HepG2 (cell line): ENCODE measurements at regions of chr1 and their contacts with region 1.

Region 1: GRCh38 chr1:39105061-39105840 is 79.1 kb downstream of the NDUFS5 start:
- DNase-seq: no peak
- ATAC-seq: peak; percentile 76
- H3K4me3 ChIP-seq: peak overlapping the region; percentile 81 to 94 (median 93)
- H3K27ac ChIP-seq: peak overlapping the region; percentile 69
- H3K4me1 ChIP-seq: peaks cover 57% of the 10 kb centered on the region
- H3K27me3 ChIP-seq: no peaks in the 10 kb centered on the region
- CTCF ChIP-seq: no peak
- EP300 ChIP-seq: no peak
- POLR2A ChIP-seq: no peak
- RAD21 ChIP-seq: no peak

Region 2: DNA sequence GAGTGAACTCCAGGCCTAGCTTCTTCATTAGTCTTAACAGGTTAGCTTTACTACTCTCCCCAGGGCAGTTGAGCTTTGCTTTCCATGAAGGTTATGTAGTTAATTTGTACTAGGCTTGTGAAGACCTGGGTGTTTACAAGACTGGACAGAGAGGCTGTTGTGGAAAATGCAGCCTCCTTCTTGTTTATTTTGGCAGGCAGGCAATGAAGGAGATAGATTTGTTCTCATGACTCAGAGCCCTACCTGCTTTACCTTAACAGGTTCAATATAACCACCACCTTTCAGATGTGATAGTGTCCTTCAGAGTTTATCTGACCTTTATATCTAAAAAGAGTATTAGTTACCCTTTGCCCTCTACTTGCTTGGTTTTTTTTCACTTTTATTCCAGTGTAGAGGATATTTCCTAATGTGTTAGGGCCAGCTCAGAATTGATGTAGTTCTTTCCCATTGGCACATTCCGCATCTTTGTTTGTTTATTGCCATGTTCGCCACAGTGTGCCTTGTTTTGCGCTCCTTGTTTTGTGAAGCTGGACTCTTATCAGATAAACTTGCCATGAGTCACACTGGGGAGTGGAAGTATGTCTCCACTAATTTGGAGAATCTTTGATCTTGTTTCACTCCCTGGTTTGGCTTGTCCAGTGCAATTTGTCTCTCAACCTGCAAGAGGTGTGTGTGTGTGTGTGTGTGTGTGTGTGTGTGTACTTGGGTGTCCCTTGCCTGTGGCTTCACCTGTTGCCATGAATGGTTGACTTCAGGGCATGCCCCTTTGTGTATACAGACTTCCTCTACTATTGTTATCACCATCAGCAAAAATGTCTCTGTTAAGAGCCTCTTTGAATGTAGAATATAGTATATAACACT is 11.8 kb after region 1 on chr1:
- CTCF ChIA-PET with region 1: no interaction called
- POLR2A ChIA-PET with region 1: interaction called, 15 read pairs
- in situ Hi-C with region 1: no loop called
- intact Hi-C with region 1: no loop called
- DNase-seq: peak; percentile 84
- ATAC-seq: peak; percentile 75
- H3K4me3 ChIP-seq: no peak overlapping the region
- H3K27ac ChIP-seq: peak overlapping the region; percentile 33
- H3K4me1 ChIP-seq: peaks cover 46% of the 10 kb centered on the region
- H3K27me3 ChIP-seq: no peaks in the 10 kb centered on the region
- CTCF ChIP-seq: no peak
- EP300 ChIP-seq: peak in 1 of 2 experiments; percentile 45; a peak in 1 of 4 replicates
- POLR2A ChIP-seq: no peak
- RAD21 ChIP-seq: no peak

Region 3: GRCh38 chr1:39132505-39133339 is 27.5 kb after region 1 on chr1:
- CTCF ChIA-PET with region 1: interaction called, 7 read pairs
- POLR2A ChIA-PET with region 1: interaction called, 5 read pairs
- in situ Hi-C with region 1: no loop called
- intact Hi-C with region 1: loop called (anchors 2 kb)
- DNase-seq: peak; percentile 85
- ATAC-seq: peak; percentile 98
- H3K4me3 ChIP-seq: peak overlapping the region in 1 of 3 experiments; percentile 24; a peak in 1 of 6 replicates
- H3K27ac ChIP-seq: peak overlapping the region; percentile 52
- H3K4me1 ChIP-seq: peaks cover 42% of the 10 kb centered on the region
- H3K27me3 ChIP-seq: no peaks in the 10 kb centered on the region
- CTCF ChIP-seq: peak; percentile 86
- EP300 ChIP-seq: no peak
- POLR2A ChIP-seq: no peak
- RAD21 ChIP-seq: peak; percentile 67

Region 4: GRCh38 chr1:39170731-39171667 is 65.7 kb after region 1 on chr1:
- CTCF ChIA-PET with region 1: no interaction called
- POLR2A ChIA-PET with region 1: interaction called, 3 read pairs
- in situ Hi-C with region 1: no loop called
- intact Hi-C with region 1: loop called (anchors 5 kb)
- DNase-seq: no peak
- ATAC-seq: peak; percentile 34; the same call in 1 of the 3 replicates
- H3K4me3 ChIP-seq: no peak overlapping the region
- H3K27ac ChIP-seq: no peak overlapping the region
- H3K4me1 ChIP-seq: peaks cover 79% of the 10 kb centered on the region
- H3K27me3 ChIP-seq: no peaks in the 10 kb centered on the region
- CTCF ChIP-seq: no peak
- EP300 ChIP-seq: no peak
- POLR2A ChIP-seq: no peak
- RAD21 ChIP-seq: no peak

Region 5: DNA sequence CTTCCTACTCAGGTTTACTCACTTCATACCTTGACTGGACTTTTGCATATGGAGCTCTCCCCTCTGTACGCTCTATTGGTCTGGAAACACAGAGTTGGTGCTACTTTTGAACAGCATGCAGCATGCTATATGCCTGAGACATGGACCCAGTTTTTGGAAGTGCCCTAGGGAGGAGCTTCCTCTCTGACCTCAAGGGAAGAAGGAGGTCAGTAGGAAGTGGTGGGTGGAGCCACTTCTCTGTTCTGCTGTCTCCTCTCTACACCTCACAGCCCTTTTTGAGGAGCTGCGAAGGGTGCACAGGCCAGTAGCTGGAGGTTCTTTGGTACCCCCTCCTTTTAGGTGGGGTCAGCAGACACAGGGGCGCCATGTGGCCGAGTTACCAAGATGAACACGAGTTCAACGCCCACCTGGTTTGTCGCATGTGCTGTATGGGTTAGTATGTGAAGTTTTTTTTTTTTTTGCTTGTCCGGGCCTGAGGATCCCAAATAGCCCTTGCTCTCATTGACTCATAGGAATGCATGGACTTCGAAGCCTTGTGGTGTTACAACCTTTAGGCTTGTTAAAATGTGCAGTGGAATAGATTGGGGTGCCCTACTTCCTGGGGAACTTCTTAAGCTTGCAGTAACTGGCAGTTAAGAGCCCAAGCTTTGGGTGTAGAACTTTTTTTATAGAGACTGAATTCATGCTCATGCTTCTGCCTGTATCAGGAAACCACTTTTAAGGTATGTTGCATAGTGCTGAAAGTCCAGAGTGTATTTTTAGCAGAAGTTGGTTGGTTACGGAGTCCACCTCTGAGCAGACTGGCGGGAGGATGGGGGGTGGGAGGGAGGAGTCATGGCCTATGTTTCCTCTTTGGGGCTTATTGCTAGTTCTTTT is 110.0 kb after region 1 on chr1:
- CTCF ChIA-PET with region 1: no interaction called
- POLR2A ChIA-PET with region 1: interaction called, 10 read pairs
- in situ Hi-C with region 1: no loop called
- intact Hi-C with region 1: no loop called
- DNase-seq: peak; percentile 62
- ATAC-seq: peak; percentile 41
- H3K4me3 ChIP-seq: peak overlapping the region; percentile 43 to 68 (median 48)
- H3K27ac ChIP-seq: peak overlapping the region; percentile 93
- H3K4me1 ChIP-seq: peaks cover 76% of the 10 kb centered on the region
- H3K27me3 ChIP-seq: no peaks in the 10 kb centered on the region
- CTCF ChIP-seq: no peak
- EP300 ChIP-seq: 0 out of 4 replicates have a peak, but pooled peaks of 1 of the 2 experiments have one; percentile 19
- POLR2A ChIP-seq: no peak; a peak in 1 of 4 replicates
- RAD21 ChIP-seq: no peak